B cell (primary cell): ENCODE measurements at regions of chr3 and their contacts with region 1.

Region 1: DNA sequence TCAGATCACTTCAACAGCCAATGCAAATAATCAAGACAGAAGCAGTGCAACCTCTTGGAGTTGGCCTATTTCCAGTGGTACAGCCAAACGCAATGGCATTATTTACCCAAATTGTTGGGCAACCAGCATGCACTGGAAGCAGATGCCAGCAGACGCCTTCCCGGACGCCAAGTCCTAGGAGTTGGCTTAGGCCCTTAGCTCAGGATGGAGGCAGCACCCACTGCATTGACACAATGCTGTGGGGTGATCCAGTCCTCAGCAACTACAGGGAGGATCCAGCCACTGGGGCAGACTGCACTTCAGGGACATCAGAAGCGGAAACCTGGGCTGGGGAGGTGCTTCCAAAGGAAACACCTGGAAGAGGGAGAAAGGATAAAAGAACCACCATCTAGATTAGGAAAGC is 290.4 kb downstream of the FAM43A start:
- DNase-seq: no peak
- ATAC-seq: no peak
- H3K4me3 ChIP-seq: no peak overlapping the region
- H3K4me3 Mint-ChIP-seq: peak overlapping the region; percentile 48
- H3K27ac ChIP-seq: no peak overlapping the region
- H3K27ac Mint-ChIP-seq: peak overlapping the region; percentile 85
- H3K4me1 ChIP-seq: peaks cover 14 to 23% of the 10 kb centered on the region in 2 donors
- H3K4me1 Mint-ChIP-seq: peaks cover 26% of the 10 kb centered on the region
- H3K27me3 ChIP-seq: no peaks in the 10 kb centered on the region
- H3K27me3 Mint-ChIP-seq: no peaks in the 10 kb centered on the region
- CTCF ChIP-seq: no peak

Region 2: DNA sequence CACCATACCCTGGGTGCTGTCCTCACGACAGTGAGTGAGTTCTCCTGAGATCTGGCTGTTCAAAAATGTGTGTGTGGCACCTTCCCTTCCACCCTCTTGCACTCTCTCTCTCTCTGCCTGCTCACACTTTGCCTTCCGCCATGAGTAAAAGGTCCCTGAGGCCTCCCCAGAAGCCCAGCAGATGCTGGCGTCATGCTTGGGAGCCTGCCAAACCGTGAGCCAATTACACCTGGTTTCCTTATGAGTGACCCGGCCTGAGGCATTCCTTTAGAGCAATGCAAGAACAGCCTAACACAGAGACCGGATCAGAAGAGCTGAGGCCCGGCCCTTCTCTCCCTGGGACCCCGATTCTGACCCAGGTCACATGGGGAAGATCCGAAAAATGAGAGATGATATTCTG is 358.2 kb before region 1 on chr3:
- CTCF ChIA-PET with region 1: no interaction called
- POLR2A ChIA-PET with region 1: no interaction called
- intact Hi-C with region 1: no loop called
- DNase-seq: no peak
- ATAC-seq: no peak
- H3K4me3 ChIP-seq: no peak overlapping the region
- H3K4me3 Mint-ChIP-seq: no peak overlapping the region
- H3K27ac ChIP-seq: no peak overlapping the region
- H3K27ac Mint-ChIP-seq: no peak overlapping the region
- H3K4me1 ChIP-seq: no peaks in the 10 kb centered on the region
- H3K4me1 Mint-ChIP-seq: no peaks in the 10 kb centered on the region
- H3K27me3 ChIP-seq: no peaks in the 10 kb centered on the region
- H3K27me3 Mint-ChIP-seq: no peaks in the 10 kb centered on the region
- CTCF ChIP-seq: no peak

Region 3: DNA sequence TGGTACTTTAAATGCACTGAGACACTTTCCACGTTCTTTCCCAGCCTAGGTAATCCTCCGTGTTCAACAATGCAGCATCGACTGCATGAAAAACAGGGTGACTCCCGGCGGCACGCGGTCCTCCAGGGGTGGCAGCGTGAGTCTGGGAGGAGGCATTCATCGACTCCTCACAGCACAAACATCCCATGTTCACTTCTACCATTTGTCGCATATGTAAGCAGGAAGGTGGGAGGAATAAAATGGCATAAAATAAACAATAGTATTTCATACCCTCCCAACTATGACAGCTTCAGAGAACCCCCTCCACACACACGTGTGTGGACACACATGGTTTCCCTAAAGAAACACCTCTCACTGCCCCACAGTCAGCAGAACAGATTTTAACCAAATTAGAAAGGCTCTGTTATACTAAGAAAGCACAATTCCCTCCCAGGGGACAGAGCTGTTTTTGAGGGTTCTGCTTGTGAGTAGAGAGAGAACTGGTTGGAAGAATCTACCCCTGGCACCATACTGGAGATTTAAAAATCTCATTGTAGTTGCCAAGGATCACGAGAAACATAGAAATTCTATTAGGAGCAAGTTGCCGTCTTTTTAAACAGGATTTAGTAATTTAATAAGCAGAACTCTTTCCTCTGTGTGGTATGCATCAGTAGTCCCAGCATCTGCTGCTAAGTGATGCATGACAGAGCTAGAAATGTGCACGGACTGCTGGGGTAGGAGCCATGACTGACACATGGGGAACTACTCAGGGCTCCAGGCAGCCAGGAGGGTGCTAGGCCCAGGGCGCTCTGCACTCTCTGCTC is 284.4 kb before region 1 on chr3:
- CTCF ChIA-PET with region 1: interaction called, 8 read pairs
- POLR2A ChIA-PET with region 1: interaction called, 13 read pairs
- intact Hi-C with region 1: loop called (anchors 1 kb)
- DNase-seq: peak; percentile 89
- ATAC-seq: peak; percentile 58
- H3K4me3 ChIP-seq: peak overlapping the region in 3 of 5 experiments; percentile 13 to 28 (median 13)
- H3K4me3 Mint-ChIP-seq: peak overlapping the region; percentile 82
- H3K27ac ChIP-seq: peak overlapping the region; percentile 78
- H3K27ac Mint-ChIP-seq: peak overlapping the region; percentile 97
- H3K4me1 ChIP-seq: peaks cover 71 to 88% of the 10 kb centered on the region in 2 donors
- H3K4me1 Mint-ChIP-seq: peaks cover 78% of the 10 kb centered on the region
- H3K27me3 ChIP-seq: no peaks in the 10 kb centered on the region
- H3K27me3 Mint-ChIP-seq: no peaks in the 10 kb centered on the region
- CTCF ChIP-seq: no peak

Region 4: GRCh38 chr3:195442573-195443390 is 466.7 kb after region 1 on chr3 and contains the start of gene ACAP2:
- CTCF ChIA-PET with region 1: no interaction called
- POLR2A ChIA-PET with region 1: no interaction called
- intact Hi-C with region 1: no loop called
- DNase-seq: peak; percentile 99
- ATAC-seq: peak; percentile 87
- H3K4me3 ChIP-seq: peak within 1 kb of the TSS; percentile 69 to 92 (median 84)
- H3K4me3 Mint-ChIP-seq: peak within 1 kb of the TSS; percentile 94
- H3K27ac ChIP-seq: peak within 1 kb of the TSS; percentile 83 to 88
- H3K27ac Mint-ChIP-seq: peak within 1 kb of the TSS; percentile 97
- H3K4me1 ChIP-seq: peaks cover 29 to 33% of the 10 kb centered on the region in 2 donors
- H3K4me1 Mint-ChIP-seq: peaks cover 40% of the 10 kb centered on the region
- H3K27me3 ChIP-seq: no peaks in the 10 kb centered on the region
- H3K27me3 Mint-ChIP-seq: no peaks in the 10 kb centered on the region
- CTCF ChIP-seq: no peak
- total RNA-seq, gene ACAP2: 108 and 113 TPM in 2 replicates